ENCODE measurements at regions of chr1 and their contacts with region 1.

Region 1: GRCh38 chr1:156025877-156026276 is 5.1 kb upstream of the SSR2 start:
- DNase-seq: peak; percentile 72 to 78
- ATAC-seq: peak; percentile 96 to 98
- H3K4me3 ChIP-seq: no peak overlapping the region
- H3K27ac ChIP-seq: 0 out of 6 replicates have a peak overlapping the region, but pooled peaks of 1 of the 2 experiments have one; percentile 23
- H3K4me1 ChIP-seq: peaks cover 6% of the 10 kb centered on the region; the same call in 2 of the 3 replicates
- CTCF ChIP-seq: peak; percentile 47
- EP300 ChIP-seq: no peak
- POLR2A ChIP-seq: no peak
- RAD21 ChIP-seq: peak; percentile 18 to 46; a peak in 2 of 5 replicates

Region 2: DNA sequence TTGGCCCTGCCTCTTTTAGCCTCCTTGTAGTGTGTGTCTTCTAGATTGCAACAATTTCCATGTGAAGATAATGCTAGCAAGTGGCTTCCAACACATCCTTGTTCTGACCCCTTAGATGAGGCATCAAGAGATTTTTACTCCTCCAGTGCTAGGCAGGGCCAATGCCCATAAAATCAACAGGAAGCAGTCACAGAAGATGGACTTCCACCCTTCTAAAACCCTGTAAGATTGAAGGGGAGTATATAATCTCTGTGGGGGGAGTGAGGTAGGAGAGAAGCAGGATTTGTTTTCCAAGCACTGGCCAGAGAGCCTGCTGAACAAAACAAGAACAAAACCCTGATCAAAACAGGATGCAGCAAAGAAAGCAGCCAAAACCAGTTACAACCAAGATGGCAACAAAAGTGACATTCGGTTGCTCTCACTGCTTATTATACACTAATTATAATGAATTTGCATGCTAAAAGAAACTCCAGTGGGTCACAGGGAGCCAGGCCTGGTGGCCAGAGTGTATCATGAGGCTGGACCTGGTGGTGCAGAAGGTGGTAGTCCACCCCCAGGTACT is 180.9 kb before region 1 on chr1:
- CTCF ChIA-PET with region 1: no interaction called
- POLR2A ChIA-PET with region 1: no interaction called
- DNase-seq: no peak
- ATAC-seq: no peak
- H3K4me3 ChIP-seq: no peak overlapping the region
- H3K27ac ChIP-seq: no peak overlapping the region
- H3K4me1 ChIP-seq: no peaks in the 10 kb centered on the region
- CTCF ChIP-seq: no peak
- EP300 ChIP-seq: no peak
- POLR2A ChIP-seq: no peak
- RAD21 ChIP-seq: no peak

Region 3: GRCh38 chr1:156042828-156043227 is 17.0 kb after region 1 on chr1:
- CTCF ChIA-PET with region 1: interaction called, 20 read pairs
- POLR2A ChIA-PET with region 1: interaction called, 6 read pairs
- DNase-seq: no peak
- ATAC-seq: no peak
- H3K4me3 ChIP-seq: no peak overlapping the region
- H3K27ac ChIP-seq: no peak overlapping the region
- H3K4me1 ChIP-seq: peaks cover 16% of the 10 kb centered on the region
- CTCF ChIP-seq: no peak
- EP300 ChIP-seq: no peak
- POLR2A ChIP-seq: no peak
- RAD21 ChIP-seq: no peak

Region 4: GRCh38 chr1:156054500-156055280 is 28.8 kb after region 1 on chr1 and contains the start of gene LAMTOR2:
- CTCF ChIA-PET with region 1: interaction called, 12 read pairs
- POLR2A ChIA-PET with region 1: no interaction called
- DNase-seq: peak; percentile 97 to 98
- ATAC-seq: peak; percentile 81 to 90
- H3K4me3 ChIP-seq: peak within 1 kb of the TSS; percentile 85
- H3K27ac ChIP-seq: peak within 1 kb of the TSS; percentile 94 to 97
- H3K4me1 ChIP-seq: peaks cover 10% of the 10 kb centered on the region; the same call in 2 of the 3 replicates
- CTCF ChIP-seq: no peak
- EP300 ChIP-seq: no peak
- POLR2A ChIP-seq: peak; percentile 83
- RAD21 ChIP-seq: no peak
- polyA plus RNA-seq, gene LAMTOR2: 63.0 and 71.4 TPM in 2 replicates

Region 5: DNA sequence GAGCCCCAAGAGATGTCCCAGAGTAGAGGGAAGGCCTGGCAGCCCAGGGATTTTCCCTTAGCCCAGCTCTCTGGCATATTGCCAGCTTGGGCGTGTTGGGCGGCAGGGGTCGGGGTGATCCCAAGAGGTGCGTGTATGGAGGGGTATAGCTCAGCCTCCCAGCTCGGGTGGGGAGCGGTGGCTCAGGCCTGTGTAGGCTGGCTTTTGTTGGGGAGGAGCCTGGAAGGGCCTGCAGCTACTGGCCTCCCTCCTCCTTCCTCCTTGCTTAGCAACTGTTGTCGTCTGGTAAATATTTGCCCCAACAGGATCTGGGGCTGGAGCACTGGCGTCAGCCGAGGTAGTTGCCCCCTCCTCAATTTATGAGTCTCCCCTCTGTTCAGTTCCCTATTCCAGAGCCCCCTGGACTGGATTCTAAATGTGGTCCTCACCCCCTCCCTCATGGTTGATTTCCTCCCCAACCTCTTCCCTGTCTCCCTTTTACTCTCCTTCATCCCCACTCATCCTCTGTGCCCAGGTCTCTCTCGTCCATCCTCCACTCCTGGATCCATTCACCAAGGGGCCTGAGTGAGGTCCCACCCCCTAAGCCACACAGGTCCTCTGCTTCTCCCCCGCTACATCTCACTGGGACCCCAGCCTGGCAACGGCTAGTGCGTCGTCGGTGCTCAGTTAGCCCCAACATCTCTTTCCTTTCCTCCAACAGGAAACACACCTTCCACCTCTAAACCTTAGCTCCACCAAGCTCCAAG is 78.4 kb after region 1 on chr1:
- CTCF ChIA-PET with region 1: no interaction called
- POLR2A ChIA-PET with region 1: no interaction called
- DNase-seq: peak; percentile 85 to 87
- ATAC-seq: peak; percentile 46 to 66; a peak in 5 of 6 replicates
- H3K4me3 ChIP-seq: no peak overlapping the region
- H3K27ac ChIP-seq: peak overlapping the region; percentile 92 to 96
- H3K4me1 ChIP-seq: peaks cover 92% of the 10 kb centered on the region
- CTCF ChIP-seq: no peak
- EP300 ChIP-seq: no peak
- POLR2A ChIP-seq: no peak
- RAD21 ChIP-seq: no peak

Measured in A549 (cell line).